H1 (cell line): ENCODE measurements at regions of chr19 and their contacts with region 1.

Region 1: DNA sequence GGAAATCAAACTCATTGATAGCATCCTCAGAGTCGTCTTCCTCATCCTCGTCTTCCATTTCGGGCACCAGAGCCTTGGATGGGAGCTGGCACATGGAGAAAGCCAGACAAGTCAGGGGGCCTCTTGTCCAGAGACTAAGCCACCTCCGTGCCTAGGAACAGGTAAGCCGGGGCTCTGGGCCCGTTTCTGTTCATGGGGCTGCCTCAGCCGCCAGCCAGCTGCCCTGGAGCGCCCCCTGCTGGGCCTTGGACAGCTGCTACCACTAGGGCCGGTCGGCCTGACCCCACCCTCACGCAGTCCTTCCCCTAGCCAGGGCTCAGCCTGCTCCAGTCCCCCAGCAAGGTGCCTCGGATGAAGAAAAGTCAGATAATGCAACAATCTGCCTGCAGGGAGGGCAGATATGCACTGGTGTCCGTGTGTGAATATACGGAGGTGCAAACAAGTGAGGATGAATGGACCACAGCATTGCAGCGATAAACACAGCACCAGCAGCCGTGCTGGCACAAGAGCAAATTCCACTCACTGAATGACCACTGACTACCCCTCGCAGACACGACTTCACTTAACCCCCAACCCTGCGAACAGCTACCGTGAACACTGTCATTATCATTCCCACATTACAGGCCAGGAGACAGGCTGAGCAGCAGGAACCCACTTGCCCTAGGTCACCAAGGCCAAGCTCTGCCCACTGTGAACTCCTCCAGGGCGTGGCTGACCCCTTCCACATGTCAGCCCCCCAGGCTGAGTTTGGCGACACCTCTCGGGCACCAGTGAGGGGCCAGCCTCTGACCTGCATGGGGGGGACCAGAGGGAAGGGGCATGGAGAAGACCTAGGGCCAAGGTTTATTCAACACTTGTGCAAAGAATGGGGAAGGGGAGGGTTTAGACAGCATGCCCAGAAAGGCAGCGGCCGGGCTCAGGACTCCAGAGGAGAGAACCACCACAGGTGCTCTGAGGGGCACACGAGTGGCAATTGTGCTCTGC is 12.1 kb upstream of the PRKD2 start:
- DNase-seq: peak in 1 of 2 experiments; percentile 90
- H3K4me3 ChIP-seq: no peak overlapping the region
- H3K27ac ChIP-seq: no peak overlapping the region
- H3K4me1 ChIP-seq: peaks cover 0 to 3% (median 0%) of the 10 kb centered on the region in 4 experiments; a peak in 4 of 7 replicates
- H3K27me3 ChIP-seq: no peaks in the 10 kb centered on the region
- CTCF ChIP-seq: peak; percentile 81 to 90 (median 89)
- EP300 ChIP-seq: no peak
- POLR2A ChIP-seq: no peak; a peak in 1 of 3 replicates
- RAD21 ChIP-seq: peak; percentile 74 to 81

Region 2: DNA sequence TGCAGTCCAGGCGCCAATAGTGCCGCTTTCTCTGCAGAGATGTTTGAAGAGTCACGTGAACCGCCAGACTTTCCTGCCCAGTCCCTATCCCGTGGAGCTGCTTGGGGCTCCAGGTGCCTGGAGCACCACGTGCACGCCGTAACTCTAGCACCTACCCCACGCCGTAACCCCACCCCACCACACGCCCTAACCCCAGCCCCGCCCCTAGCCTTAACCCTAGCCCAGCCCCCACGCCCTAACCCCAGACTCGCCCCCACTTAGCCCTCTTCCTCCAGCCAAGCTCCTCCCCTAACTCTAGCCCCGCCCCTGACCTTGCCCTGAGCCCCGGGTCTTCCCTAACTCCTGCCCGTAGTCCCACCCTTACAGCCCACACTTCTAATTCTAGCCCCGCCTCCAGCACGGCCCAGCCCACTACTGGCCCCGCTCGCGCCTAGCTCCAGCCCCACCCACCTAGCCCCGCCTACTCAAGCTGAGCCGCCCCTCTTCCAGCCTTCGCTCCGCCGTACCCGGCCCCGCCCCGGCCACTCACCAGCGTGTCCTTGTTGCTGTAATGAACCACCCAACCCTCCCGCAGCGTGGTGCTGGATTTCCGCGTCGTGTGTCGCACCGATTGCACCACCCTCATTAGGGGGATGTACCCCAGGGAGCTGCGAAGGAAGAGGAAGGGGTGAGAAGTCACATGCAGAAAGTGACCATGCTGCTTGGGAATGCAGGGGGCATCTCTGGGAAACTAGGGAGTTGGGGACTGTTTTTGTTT is 31.6 kb before region 1 on chr19:
- CTCF ChIA-PET with region 1: interaction called, 188 read pairs
- POLR2A ChIA-PET with region 1: interaction called, 7 read pairs
- DNase-seq: peak; percentile 96 to 99
- H3K4me3 ChIP-seq: peak overlapping the region; percentile 11 to 48 (median 38); a peak in 6 of 8 replicates
- H3K27ac ChIP-seq: no peak overlapping the region
- H3K4me1 ChIP-seq: peaks cover 0 to 8% (median 6%) of the 10 kb centered on the region in 4 experiments; a peak in 6 of 7 replicates
- H3K27me3 ChIP-seq: no peaks in the 10 kb centered on the region
- CTCF ChIP-seq: no peak
- EP300 ChIP-seq: no peak
- POLR2A ChIP-seq: no peak
- RAD21 ChIP-seq: no peak

Region 3: GRCh38 chr19:46717034-46717723 is 11.8 kb before region 1 on chr19 and contains the start of gene PRKD2:
- CTCF ChIA-PET with region 1: interaction called, 46 read pairs
- POLR2A ChIA-PET with region 1: interaction called, 12 read pairs
- DNase-seq: peak in 1 of 2 experiments; percentile 100
- H3K4me3 ChIP-seq: peak within 1 kb of the TSS; percentile 76 to 94 (median 81)
- H3K27ac ChIP-seq: peak within 1 kb of the TSS; percentile 78
- H3K4me1 ChIP-seq: peaks cover 0 to 15% (median 6%) of the 10 kb centered on the region in 4 experiments; a peak in 5 of 7 replicates
- H3K27me3 ChIP-seq: no peaks in the 10 kb centered on the region
- CTCF ChIP-seq: no peak
- EP300 ChIP-seq: no peak
- POLR2A ChIP-seq: peak in 1 of 2 experiments; percentile 66; a peak in 2 of 3 replicates
- RAD21 ChIP-seq: no peak
- total RNA-seq, gene PRKD2: 63.8 and 73.1 TPM in 2 replicates

Region 4: GRCh38 chr19:46746281-46747013 is 17.5 kb after region 1 on chr19 and contains the start of gene STRN4:
- CTCF ChIA-PET with region 1: interaction called, 48 read pairs
- POLR2A ChIA-PET with region 1: interaction called, 26 read pairs
- DNase-seq: peak in 1 of 2 experiments; percentile 67
- H3K4me3 ChIP-seq: peak within 1 kb of the TSS; percentile 84 to 97 (median 93)
- H3K27ac ChIP-seq: peak within 1 kb of the TSS; percentile 85
- H3K4me1 ChIP-seq: peaks cover 0 to 8% (median 2%) of the 10 kb centered on the region in 4 experiments; a peak in 6 of 7 replicates
- H3K27me3 ChIP-seq: no peaks in the 10 kb centered on the region
- CTCF ChIP-seq: no peak
- EP300 ChIP-seq: no peak
- POLR2A ChIP-seq: no peak; a peak in 1 of 3 replicates
- RAD21 ChIP-seq: no peak
- total RNA-seq, gene STRN4: 120 and 124 TPM in 2 replicates